Posterior vena cava (tissue), 2 donors: ENCODE measurements at regions of chr2 and their contacts with region 1.

Region 1: GRCh38 chr2:67423489-67423888 is 26.4 kb downstream of the ETAA1 start:
- DNase-seq: no peak

Region 2: GRCh38 chr2:66228128-66228547 is 1195.4 kb before region 1 on chr2:
- intact Hi-C with region 1: loop called in 1 of 2 experiments (anchors 10 kb)
- DNase-seq: no peak

Region 3: GRCh38 chr2:67346718-67347407 is 76.6 kb before region 1 on chr2:
- intact Hi-C with region 1: no loop called
- DNase-seq: no peak

Region 4: GRCh38 chr2:67397143-67397986 is 26.1 kb before region 1 on chr2 and contains the start of gene ETAA1:
- intact Hi-C with region 1: no loop called
- DNase-seq: peak; percentile 98
- total RNA-seq, gene ETAA1: 12.5 to 12.6 TPM